ENCODE measurements at regions of chr16 and their contacts with region 1.

Region 1: GRCh38 chr16:1420111-1420540 is 421 bp downstream of the UQCC4 start:
- DNase-seq: peak in 1 of 14 experiments; percentile 21
- ATAC-seq: no peak
- H3K4me3 ChIP-seq: peak overlapping the region; percentile 97
- H3K4me3 Mint-ChIP-seq: peak overlapping the region; percentile 89
- H3K27ac ChIP-seq: peak overlapping the region; percentile 82 to 93
- H3K27ac Mint-ChIP-seq: peak overlapping the region; percentile 98
- H3K4me1 ChIP-seq: peaks cover 32% of the 10 kb centered on the region
- H3K4me1 Mint-ChIP-seq: peaks cover 11% of the 10 kb centered on the region
- H3K27me3 ChIP-seq: no peaks in the 10 kb centered on the region
- H3K27me3 Mint-ChIP-seq: no peaks in the 10 kb centered on the region
- CTCF ChIP-seq: no peak

Region 2: GRCh38 chr16:1408171-1408837 is 11.8 kb before region 1 on chr16:
- CTCF ChIA-PET with region 1: no interaction called
- POLR2A ChIA-PET with region 1: interaction called, 23 read pairs
- intact Hi-C with region 1: no loop called
- DNase-seq: peak; percentile 89 to 99 (median 96)
- ATAC-seq: peak; percentile 92
- H3K4me3 ChIP-seq: peak overlapping the region; percentile 51
- H3K4me3 Mint-ChIP-seq: peak overlapping the region; percentile 68
- H3K27ac ChIP-seq: peak overlapping the region in 1 of 2 donors; percentile 29
- H3K27ac Mint-ChIP-seq: peak overlapping the region; percentile 71
- H3K4me1 ChIP-seq: peaks cover 24% of the 10 kb centered on the region
- H3K4me1 Mint-ChIP-seq: peaks cover 34% of the 10 kb centered on the region
- H3K27me3 ChIP-seq: no peaks in the 10 kb centered on the region
- H3K27me3 Mint-ChIP-seq: no peaks in the 10 kb centered on the region
- CTCF ChIP-seq: no peak

Region 3: GRCh38 chr16:1492923-1493745 is 73.0 kb after region 1 on chr16 and contains the start of gene TELO2:
- CTCF ChIA-PET with region 1: interaction called, 4 read pairs
- POLR2A ChIA-PET with region 1: interaction called, 18 read pairs
- intact Hi-C with region 1: loop called in 1 of 2 experiments (anchors 5 kb)
- DNase-seq: peak; percentile 79 to 95 (median 88)
- ATAC-seq: peak; percentile 87
- H3K4me3 ChIP-seq: peak within 1 kb of the TSS; percentile 86
- H3K4me3 Mint-ChIP-seq: peak within 1 kb of the TSS; percentile 95
- H3K27ac ChIP-seq: peak within 1 kb of the TSS; percentile 84
- H3K27ac Mint-ChIP-seq: peak within 1 kb of the TSS; percentile 97
- H3K4me1 ChIP-seq: peaks cover 27% of the 10 kb centered on the region
- H3K4me1 Mint-ChIP-seq: peaks cover 10% of the 10 kb centered on the region
- H3K27me3 ChIP-seq: no peaks in the 10 kb centered on the region
- H3K27me3 Mint-ChIP-seq: no peaks in the 10 kb centered on the region
- CTCF ChIP-seq: peak; percentile 19
- total RNA-seq, gene TELO2: 29.7 to 30.8 TPM

Region 4: DNA sequence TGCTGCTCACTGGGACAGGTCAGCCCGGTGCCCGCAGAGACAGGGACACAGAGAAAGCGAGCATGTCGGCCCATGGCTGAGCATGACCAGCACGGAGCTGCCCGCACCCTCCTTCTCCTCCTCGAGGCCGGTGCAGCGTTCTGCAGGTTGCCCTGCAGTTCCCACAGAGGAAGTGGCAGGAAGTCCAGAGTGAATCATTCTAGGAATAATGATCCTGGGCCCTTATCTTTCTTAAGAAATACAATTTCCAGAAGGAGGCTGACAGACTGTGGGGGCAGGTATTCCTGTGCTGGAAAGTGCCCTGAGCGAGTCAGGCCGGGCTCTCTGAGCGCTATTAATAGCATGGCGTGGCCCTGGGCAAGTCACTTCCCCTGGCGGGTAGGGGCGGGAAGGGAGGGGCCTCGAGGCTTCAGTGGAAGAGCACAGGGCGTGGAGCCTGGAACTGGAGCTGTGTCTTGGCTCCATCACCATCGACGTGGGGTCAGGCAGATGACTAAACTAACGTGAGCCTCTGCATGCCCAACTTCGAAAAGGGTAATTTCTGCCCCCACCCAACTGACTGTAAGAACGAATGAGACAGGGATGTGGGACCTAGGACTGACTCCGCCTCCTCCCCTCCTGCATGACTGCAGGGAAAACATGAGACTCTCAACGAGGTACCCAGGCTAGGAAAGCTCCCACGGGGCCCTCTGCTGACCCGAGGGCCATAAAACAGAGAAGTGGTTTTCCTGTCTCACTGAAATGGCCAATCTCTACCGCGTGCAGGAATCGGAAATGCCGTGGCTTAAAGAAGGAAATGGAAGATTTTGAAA is 123.2 kb after region 1 on chr16:
- CTCF ChIA-PET with region 1: interaction called, 3 read pairs
- POLR2A ChIA-PET with region 1: interaction called, 4 read pairs
- intact Hi-C with region 1: loop called in 1 of 2 experiments (anchors 5 kb)
- DNase-seq: peak in 9 of 14 experiments; percentile 24 to 76 (median 45)
- ATAC-seq: peak; percentile 66
- H3K4me3 ChIP-seq: peak overlapping the region; percentile 10
- H3K4me3 Mint-ChIP-seq: peak overlapping the region; percentile 54
- H3K27ac ChIP-seq: peak overlapping the region; percentile 56 to 58
- H3K27ac Mint-ChIP-seq: peak overlapping the region; percentile 80
- H3K4me1 ChIP-seq: peaks cover 99% of the 10 kb centered on the region
- H3K4me1 Mint-ChIP-seq: peaks cover 81% of the 10 kb centered on the region
- H3K27me3 ChIP-seq: no peaks in the 10 kb centered on the region
- H3K27me3 Mint-ChIP-seq: no peaks in the 10 kb centered on the region
- CTCF ChIP-seq: no peak

Region 5: DNA sequence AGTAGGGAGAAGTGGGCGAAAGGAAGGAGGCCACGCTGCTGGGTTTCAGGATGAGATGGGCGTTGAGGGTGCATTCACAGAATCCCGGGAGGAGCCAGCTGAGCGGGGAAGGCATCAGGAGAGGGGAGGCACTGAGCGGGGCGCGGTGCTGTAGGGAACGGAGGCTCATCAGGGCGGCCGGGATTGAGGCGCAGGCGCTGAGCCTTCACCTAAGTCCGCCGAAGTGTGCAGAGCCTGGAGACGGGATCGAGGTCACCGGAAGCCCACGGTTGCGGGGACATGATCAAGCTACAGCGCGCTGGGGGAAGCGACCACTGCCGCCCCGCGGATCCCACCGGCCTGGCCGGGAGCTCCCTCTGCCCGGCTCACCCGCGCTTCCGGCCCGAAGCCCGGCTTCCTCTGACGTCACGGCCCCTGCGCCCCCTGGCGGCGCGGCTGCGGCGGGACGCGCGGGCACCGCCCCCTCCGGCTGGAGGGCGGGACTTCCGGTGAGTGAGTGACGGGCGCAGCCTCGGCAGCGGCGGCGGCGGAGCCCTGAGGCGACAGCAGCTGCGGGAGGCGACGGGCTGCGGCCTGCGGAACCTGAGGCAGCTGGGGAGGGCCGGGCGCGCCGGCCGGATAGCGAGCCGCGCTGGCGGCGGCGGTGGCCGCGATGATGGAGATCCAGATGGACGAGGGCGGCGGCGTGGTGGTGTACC is 285.7 kb after region 1 on chr16 and contains the start of gene MAPK8IP3:
- CTCF ChIA-PET with region 1: interaction called, 8 read pairs
- POLR2A ChIA-PET with region 1: interaction called, 25 read pairs
- intact Hi-C with region 1: loop called (anchors 5 kb)
- DNase-seq: peak; percentile 84 to 99 (median 94)
- ATAC-seq: peak; percentile 75
- H3K4me3 ChIP-seq: peak within 1 kb of the TSS; percentile 98
- H3K4me3 Mint-ChIP-seq: peak within 1 kb of the TSS; percentile 96
- H3K27ac ChIP-seq: peak within 1 kb of the TSS; percentile 77 to 79
- H3K27ac Mint-ChIP-seq: peak within 1 kb of the TSS; percentile 97
- H3K4me1 ChIP-seq: peaks cover 35% of the 10 kb centered on the region
- H3K4me1 Mint-ChIP-seq: peaks cover 38% of the 10 kb centered on the region
- H3K27me3 ChIP-seq: no peaks in the 10 kb centered on the region
- H3K27me3 Mint-ChIP-seq: no peaks in the 10 kb centered on the region
- CTCF ChIP-seq: peak; percentile 70
- total RNA-seq, gene MAPK8IP3: 290 to 297 TPM

Region 6: DNA sequence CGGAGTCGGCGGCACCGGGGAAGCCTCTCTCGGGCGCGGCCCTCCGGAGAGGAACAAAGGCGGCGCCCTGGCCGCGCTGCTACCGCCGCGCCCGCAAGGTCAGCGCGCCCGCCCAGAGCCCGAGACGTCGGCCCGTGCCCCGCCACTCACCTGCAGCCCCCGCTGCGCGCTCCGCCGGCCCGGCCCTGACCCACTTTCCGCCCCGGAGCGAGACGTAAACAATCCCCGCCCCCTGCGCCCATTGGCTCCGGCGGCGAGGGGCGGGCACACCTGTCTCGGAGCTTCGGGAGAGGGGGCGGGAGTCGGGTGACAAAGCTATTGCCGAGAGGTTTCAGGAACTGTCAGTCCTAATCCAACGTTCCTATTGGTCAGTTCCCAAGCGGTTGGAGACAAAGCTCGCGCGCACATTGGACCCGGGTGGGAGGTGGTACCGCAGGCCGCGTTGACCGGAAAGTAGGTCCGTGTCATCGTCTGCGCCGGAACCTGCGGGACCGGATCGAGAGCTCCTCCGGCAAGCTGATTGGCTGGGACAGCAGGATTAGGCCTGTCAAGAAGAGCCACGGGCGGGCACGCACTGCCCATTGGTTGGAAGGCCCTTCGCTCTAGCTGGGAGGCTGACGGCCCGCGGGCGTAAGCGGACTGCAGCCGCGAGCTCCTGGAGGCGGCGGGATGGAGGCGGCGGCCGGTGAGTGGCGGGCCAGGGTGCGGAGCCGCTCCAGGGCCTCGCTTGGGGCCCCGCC is 362.4 kb after region 1 on chr16 and contains the starts of genes NUBP2 and SPSB3:
- CTCF ChIA-PET with region 1: no interaction called
- POLR2A ChIA-PET with region 1: interaction called, 17 read pairs
- intact Hi-C with region 1: loop called in 1 of 2 experiments (anchors 1 kb)
- DNase-seq: peak; percentile 93 to 100 (median 97)
- ATAC-seq: peak; percentile 84
- H3K4me3 ChIP-seq: peak within 1 kb of the TSS; percentile 88
- H3K4me3 Mint-ChIP-seq: peak within 1 kb of the TSS; percentile 95
- H3K27ac ChIP-seq: peak within 1 kb of the TSS; percentile 69 to 74
- H3K27ac Mint-ChIP-seq: peak within 1 kb of the TSS; percentile 96
- H3K4me1 ChIP-seq: peaks cover 61% of the 10 kb centered on the region
- H3K4me1 Mint-ChIP-seq: peaks cover 26% of the 10 kb centered on the region
- H3K27me3 ChIP-seq: no peaks in the 10 kb centered on the region
- H3K27me3 Mint-ChIP-seq: no peaks in the 10 kb centered on the region
- CTCF ChIP-seq: no peak
- total RNA-seq, gene NUBP2: 36.4 to 38.1 TPM
- total RNA-seq, gene SPSB3: 86.3 to 87.6 TPM